A549 (cell line): ENCODE measurements at regions of chr9 and their contacts with region 1.

Region 1: GRCh38 chr9:129737479-129738274 is 15.2 kb downstream of the PTGES start:
- DNase-seq: peak; percentile 79 to 81
- ATAC-seq: peak; percentile 84 to 90
- H3K4me3 ChIP-seq: peak overlapping the region; percentile 41
- H3K27ac ChIP-seq: peak overlapping the region; percentile 86 to 95
- H3K4me1 ChIP-seq: peaks cover 10% of the 10 kb centered on the region
- CTCF ChIP-seq: peak; percentile 95
- EP300 ChIP-seq: no peak
- POLR2A ChIP-seq: no peak
- RAD21 ChIP-seq: peak; percentile 93 to 98

Region 2: GRCh38 chr9:129656795-129657390 is 80.8 kb before region 1 on chr9:
- CTCF ChIA-PET with region 1: interaction called, 11 read pairs
- POLR2A ChIA-PET with region 1: no interaction called
- DNase-seq: peak; percentile 57 to 83
- ATAC-seq: peak; percentile 89 to 92
- H3K4me3 ChIP-seq: no peak overlapping the region
- H3K27ac ChIP-seq: peak overlapping the region; percentile 40 to 47; a peak in 3 of 6 replicates
- H3K4me1 ChIP-seq: peaks cover 17% of the 10 kb centered on the region
- CTCF ChIP-seq: no peak
- EP300 ChIP-seq: no peak
- POLR2A ChIP-seq: no peak
- RAD21 ChIP-seq: no peak

Region 3: DNA sequence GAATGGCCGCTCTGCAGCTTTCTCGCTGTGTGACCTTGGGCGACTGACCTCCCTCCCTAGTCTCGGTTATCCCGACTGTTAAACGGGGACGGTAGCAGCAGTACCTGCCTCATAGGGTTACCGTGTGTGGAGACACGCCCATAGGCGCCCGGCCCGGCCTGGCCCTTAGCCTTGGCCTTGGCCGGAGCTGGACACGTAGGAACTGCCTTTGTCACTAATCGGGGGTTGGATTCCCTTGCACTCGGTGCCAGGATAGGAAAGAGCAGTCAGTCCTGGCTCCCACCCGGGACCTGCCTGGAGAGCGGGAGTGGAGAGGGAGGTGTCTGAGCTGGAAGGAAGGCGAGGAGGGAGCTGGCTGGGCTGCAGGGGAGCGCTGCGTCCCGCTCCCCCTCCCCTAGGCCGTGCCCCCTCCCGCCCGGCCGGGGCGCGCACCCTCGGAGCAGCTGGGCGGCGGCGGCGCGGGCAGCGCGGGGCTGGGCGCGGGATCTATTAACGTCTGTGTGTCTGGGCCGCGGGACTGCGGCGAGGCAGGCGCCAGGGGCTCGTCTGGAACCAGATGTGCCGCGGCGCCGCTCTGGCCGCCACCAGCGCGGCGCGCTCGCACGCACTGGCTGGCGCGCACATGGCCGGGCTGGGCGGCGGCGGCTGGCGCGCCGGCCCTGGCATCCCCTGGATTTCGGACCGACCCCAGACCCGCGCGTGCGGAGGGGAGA is 40.6 kb before region 1 on chr9:
- CTCF ChIA-PET with region 1: interaction called, 21 read pairs
- POLR2A ChIA-PET with region 1: no interaction called
- DNase-seq: peak; percentile 44 to 60
- ATAC-seq: peak; percentile 76 to 85
- H3K4me3 ChIP-seq: peak overlapping the region; percentile 64
- H3K27ac ChIP-seq: peak overlapping the region; percentile 97
- H3K4me1 ChIP-seq: peaks cover 13% of the 10 kb centered on the region
- CTCF ChIP-seq: no peak
- EP300 ChIP-seq: no peak
- POLR2A ChIP-seq: peak; percentile 43
- RAD21 ChIP-seq: no peak

Region 4: DNA sequence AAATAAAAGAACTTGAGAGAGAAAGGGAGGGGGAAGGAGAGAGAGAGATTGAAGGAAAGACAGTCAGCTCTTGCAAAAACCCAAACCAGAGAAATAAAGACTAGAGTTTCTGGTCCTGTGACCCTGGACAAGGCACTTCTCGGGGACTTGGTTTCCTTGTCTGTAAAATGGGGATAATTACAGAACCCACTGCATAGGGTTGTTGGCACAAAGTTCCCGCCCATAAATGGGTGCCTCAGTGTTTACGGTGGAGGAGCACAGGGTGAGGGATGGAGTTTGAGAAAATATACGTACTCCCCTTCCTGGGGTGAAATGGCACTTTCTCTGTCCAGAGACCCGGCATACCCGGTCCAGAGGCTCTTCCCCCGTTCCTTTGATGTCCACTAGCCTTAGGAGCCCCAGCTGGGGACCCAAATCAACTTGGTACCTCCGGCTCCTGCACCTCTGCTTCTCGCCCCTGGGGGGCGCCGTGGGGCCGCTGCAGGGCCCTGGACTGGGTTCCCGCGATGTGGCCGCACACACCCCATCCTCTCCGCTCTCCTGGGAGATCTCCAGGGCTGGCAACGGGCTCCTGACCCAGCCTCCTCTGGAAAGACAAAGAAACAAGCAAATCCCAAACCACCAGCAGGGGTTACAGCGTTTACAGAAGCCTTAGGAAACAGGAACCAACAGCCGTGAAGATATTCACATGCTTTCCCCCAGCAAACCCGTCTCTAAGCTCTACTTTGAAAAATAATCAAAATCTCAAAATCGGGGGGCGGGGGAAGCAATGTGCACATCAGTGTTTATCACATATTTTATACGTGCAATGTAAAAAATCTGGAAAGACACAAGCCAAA is 11.1 kb before region 1 on chr9:
- CTCF ChIA-PET with region 1: interaction called, 235 read pairs
- POLR2A ChIA-PET with region 1: interaction called, 3 read pairs
- DNase-seq: peak; percentile 87 to 97
- ATAC-seq: peak; percentile 91 to 97
- H3K4me3 ChIP-seq: no peak overlapping the region
- H3K27ac ChIP-seq: peak overlapping the region in 1 of 2 experiments; percentile 73; a peak in 3 of 6 replicates
- H3K4me1 ChIP-seq: no peaks in the 10 kb centered on the region
- CTCF ChIP-seq: peak; percentile 93
- EP300 ChIP-seq: no peak
- POLR2A ChIP-seq: no peak
- RAD21 ChIP-seq: peak; percentile 87 to 91

Region 5: GRCh38 chr9:129761901-129762364 is 24.3 kb after region 1 on chr9:
- CTCF ChIA-PET with region 1: interaction called, 161 read pairs
- POLR2A ChIA-PET with region 1: interaction called, 3 read pairs
- DNase-seq: peak in 1 of 2 experiments; percentile 85
- ATAC-seq: peak; percentile 81 to 87
- H3K4me3 ChIP-seq: no peak overlapping the region
- H3K27ac ChIP-seq: peak overlapping the region; percentile 59 to 91
- H3K4me1 ChIP-seq: peaks cover 25% of the 10 kb centered on the region
- CTCF ChIP-seq: no peak
- EP300 ChIP-seq: no peak
- POLR2A ChIP-seq: no peak
- RAD21 ChIP-seq: no peak

Region 6: DNA sequence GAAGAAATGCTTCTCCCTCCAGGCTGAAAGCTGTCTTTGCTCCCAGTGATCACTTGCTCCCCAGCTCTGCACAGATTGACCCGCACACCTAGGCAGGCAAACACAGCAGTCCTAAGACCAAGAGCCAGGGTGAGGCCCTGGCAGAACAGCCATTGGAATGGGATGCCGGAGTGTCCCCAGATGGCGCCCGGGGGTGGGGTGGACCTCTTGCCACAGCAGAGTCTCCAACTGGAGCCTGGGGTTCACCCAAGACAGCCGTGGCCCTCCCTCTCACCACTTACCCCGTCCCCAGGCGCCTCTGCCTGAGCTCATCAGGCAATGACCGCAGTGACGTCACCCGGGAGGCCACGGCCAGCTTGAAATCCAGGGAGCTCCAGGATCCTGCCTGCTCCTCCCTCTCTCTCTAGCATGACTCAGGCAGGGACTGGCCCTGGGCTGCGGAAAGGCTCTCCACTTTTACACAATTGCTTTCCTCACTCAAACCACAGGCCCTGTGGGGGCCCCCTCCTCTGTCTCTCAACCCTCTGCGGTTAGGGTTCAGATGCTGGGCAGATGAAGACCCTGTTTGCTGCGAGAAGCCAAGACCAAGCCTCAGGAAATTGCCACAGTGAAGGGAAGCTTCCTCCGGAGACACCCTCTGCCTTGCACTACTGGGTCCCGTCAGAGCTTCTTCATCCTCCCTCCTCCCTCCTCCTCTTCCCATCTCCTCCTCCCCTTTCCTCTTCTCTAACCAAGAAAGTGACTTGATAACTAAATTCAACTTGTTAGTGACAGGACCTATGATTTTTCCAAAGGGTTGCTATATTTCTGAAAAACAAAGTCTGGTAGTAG is 39.5 kb after region 1 on chr9:
- CTCF ChIA-PET with region 1: interaction called, 1,179 read pairs
- POLR2A ChIA-PET with region 1: interaction called, 22 read pairs
- DNase-seq: peak; percentile 96 to 99
- ATAC-seq: peak; percentile 95 to 97
- H3K4me3 ChIP-seq: 0 out of 3 replicates have a peak overlapping the region, but pooled peaks have one; percentile 11
- H3K27ac ChIP-seq: peak overlapping the region; percentile 88 to 89
- H3K4me1 ChIP-seq: peaks cover 66% of the 10 kb centered on the region
- CTCF ChIP-seq: no peak
- EP300 ChIP-seq: peak; percentile 55 to 89; a peak in 3 of 5 replicates
- POLR2A ChIP-seq: peak; percentile 42
- RAD21 ChIP-seq: peak in 1 of 2 experiments; percentile 26; a peak in 1 of 5 replicates

Region 7: GRCh38 chr9:129802851-129803675 is 65.4 kb after region 1 on chr9 and contains the start of gene TOR1B:
- CTCF ChIA-PET with region 1: interaction called, 12 read pairs
- POLR2A ChIA-PET with region 1: no interaction called
- DNase-seq: peak; percentile 55 to 96
- ATAC-seq: peak; percentile 95
- H3K4me3 ChIP-seq: peak within 1 kb of the TSS; percentile 84
- H3K27ac ChIP-seq: peak within 1 kb of the TSS; percentile 78 to 90
- H3K4me1 ChIP-seq: peaks cover 6% of the 10 kb centered on the region
- CTCF ChIP-seq: no peak
- EP300 ChIP-seq: no peak
- POLR2A ChIP-seq: peak; percentile 92
- RAD21 ChIP-seq: no peak
- polyA plus RNA-seq, gene TOR1B: 32.4 and 38.0 TPM in 2 replicates